ENCODE measurements at regions of chr2 and their contacts with region 1.

Region 1: DNA sequence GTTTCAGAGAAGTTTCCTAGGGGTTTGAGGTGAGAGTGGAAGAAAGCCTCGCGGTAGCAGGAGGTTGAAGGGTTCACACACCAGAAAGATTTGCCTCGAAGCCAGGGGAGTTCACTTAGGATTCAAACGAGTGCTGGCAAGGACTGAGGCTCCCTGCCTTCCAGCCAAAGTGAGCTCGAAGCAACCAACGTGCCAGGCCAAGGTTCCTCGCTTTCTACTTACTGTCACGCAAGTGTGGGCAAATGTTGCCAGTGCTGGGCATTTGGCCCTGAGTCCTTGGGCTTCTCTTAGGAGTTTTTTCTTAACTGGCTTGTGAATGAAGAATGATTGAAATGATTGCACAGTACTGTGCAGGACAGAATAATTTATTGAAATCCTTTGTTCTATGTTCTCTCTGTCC is 53.6 kb downstream of the TMEM178A start:
- DNase-seq: no peak
- ATAC-seq: no peak

Region 2: GRCh38 chr2:40095000-40095399 is 375.7 kb after region 1 on chr2:
- intact Hi-C with region 1: loop called (anchors 10 kb)
- DNase-seq: no peak
- ATAC-seq: no peak

Measured in sciatic nerve (tissue), 2 donors.